ENCODE measurements at regions of chr2 and their contacts with region 1.

Region 1: GRCh38 chr2:221588306-221588985 is 16.3 kb upstream of the EPHA4 start:
- DNase-seq: no peak
- H3K4me3 Mint-ChIP-seq: no peak overlapping the region
- H3K27ac Mint-ChIP-seq: no peak overlapping the region
- H3K4me1 Mint-ChIP-seq: no peaks in the 10 kb centered on the region
- H3K27me3 Mint-ChIP-seq: peaks cover 20% of the 10 kb centered on the region

Region 2: GRCh38 chr2:221969087-221969829 is 380.8 kb after region 1 on chr2:
- CTCF ChIA-PET with region 1: no interaction called
- intact Hi-C with region 1: loop called (anchors 5 kb)
- DNase-seq: peak; percentile 9
- H3K4me3 Mint-ChIP-seq: no peak overlapping the region
- H3K27ac Mint-ChIP-seq: no peak overlapping the region
- H3K4me1 Mint-ChIP-seq: no peaks in the 10 kb centered on the region
- H3K27me3 Mint-ChIP-seq: peaks cover 3% of the 10 kb centered on the region

Measured in activated naive CD4-positive, alpha-beta T cell treated with anti-CD3 and anti-CD28 coated beads for 36 hours (primary cell).